OCI-LY7 (cell line): ENCODE measurements at regions of chr7 and their contacts with region 1.

Region 1: GRCh38 chr7:3154912-3155494 is 111.3 kb upstream of the CARD11 start:
- DNase-seq: peak; percentile 76
- H3K4me3 ChIP-seq: no peak overlapping the region
- H3K27ac ChIP-seq: no peak overlapping the region
- H3K4me1 ChIP-seq: peaks cover 40% of the 10 kb centered on the region
- CTCF ChIP-seq: peak; percentile 94

Region 2: GRCh38 chr7:2863461-2864066 is 291.4 kb before region 1 on chr7:
- CTCF ChIA-PET with region 1: interaction called, 3 read pairs
- POLR2A ChIA-PET with region 1: interaction called, 3 read pairs
- intact Hi-C with region 1: loop called (anchors 1 kb)
- DNase-seq: peak; percentile 40
- H3K4me3 ChIP-seq: no peak overlapping the region
- H3K27ac ChIP-seq: no peak overlapping the region
- H3K4me1 ChIP-seq: peaks cover 9% of the 10 kb centered on the region
- CTCF ChIP-seq: no peak

Region 3: DNA sequence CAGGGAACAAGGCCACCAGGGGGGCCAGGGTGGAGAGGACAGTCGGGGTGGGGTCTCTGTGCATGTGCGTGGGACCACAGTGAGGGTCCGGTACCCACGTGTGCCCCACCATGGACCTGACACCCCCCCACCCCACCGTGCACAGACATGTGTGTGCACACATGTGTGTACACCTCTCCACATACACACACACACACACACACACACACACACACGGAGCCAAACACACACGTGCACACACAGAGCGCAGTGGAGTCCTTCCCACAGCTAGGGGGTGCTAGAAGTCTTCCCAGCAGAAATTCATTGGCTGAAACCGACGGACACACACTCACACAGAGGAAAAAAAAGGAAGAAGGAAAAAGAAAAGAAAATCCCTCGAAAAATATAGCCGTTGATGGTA is 268.1 kb before region 1 on chr7:
- CTCF ChIA-PET with region 1: no interaction called
- POLR2A ChIA-PET with region 1: interaction called, 5 read pairs
- intact Hi-C with region 1: loop called (anchors 1 kb)
- DNase-seq: peak; percentile 84
- H3K4me3 ChIP-seq: no peak overlapping the region
- H3K27ac ChIP-seq: no peak overlapping the region
- H3K4me1 ChIP-seq: peaks cover 27% of the 10 kb centered on the region
- CTCF ChIP-seq: peak; percentile 95

Region 4: DNA sequence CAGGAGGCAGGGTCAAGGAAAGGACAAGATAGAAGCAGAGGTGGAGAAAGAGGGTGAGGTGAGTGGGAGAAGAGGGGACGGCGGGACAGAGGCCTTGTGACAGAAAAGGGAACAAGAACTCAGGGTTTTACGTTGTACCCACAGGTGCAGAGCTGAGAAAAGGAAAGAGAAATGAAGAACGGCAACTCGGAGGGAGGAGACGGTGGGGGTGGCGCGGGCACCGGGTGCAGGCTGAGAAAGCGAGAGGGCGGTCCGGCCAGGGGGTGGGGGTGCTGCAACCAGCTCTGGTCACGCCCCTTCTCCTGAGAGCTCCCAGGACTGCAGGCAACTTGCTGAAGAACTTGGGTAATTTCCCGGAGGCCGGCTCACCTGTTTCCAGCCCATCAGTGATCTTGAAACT is 176.6 kb before region 1 on chr7:
- CTCF ChIA-PET with region 1: no interaction called
- POLR2A ChIA-PET with region 1: interaction called, 3 read pairs
- intact Hi-C with region 1: loop called (anchors 2 kb)
- DNase-seq: peak; percentile 94
- H3K4me3 ChIP-seq: peak overlapping the region; percentile 73
- H3K27ac ChIP-seq: peak overlapping the region; percentile 90
- H3K4me1 ChIP-seq: peaks cover 66% of the 10 kb centered on the region
- CTCF ChIP-seq: no peak

Region 5: DNA sequence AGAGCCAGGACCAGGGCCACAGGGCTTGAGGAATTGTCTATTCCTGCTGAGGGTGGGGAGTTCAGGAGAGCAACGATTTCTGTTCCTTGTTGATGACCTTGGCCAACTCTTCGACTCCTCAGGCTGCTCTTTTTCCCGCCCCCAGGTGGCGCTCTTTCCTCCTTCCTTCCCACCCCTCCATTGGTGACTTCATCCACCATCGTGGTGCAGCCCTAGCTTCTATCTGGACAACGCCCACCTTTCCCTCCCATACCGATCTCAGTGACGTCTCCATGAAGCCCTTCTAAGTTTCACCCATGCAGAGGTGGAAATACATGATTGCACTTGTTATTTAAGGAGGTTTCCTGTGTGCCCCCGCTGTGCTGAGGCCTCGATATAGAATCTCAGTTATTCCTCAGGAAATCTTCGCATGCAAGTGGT is 89.3 kb before region 1 on chr7:
- CTCF ChIA-PET with region 1: no interaction called
- POLR2A ChIA-PET with region 1: no interaction called
- intact Hi-C with region 1: loop called (anchors 1 kb)
- DNase-seq: peak; percentile 60
- H3K4me3 ChIP-seq: no peak overlapping the region
- H3K27ac ChIP-seq: no peak overlapping the region
- H3K4me1 ChIP-seq: no peaks in the 10 kb centered on the region
- CTCF ChIP-seq: peak; percentile 90

Region 6: GRCh38 chr7:3089493-3089892 is 65.5 kb before region 1 on chr7:
- CTCF ChIA-PET with region 1: no interaction called
- POLR2A ChIA-PET with region 1: interaction called, 7 read pairs
- intact Hi-C with region 1: loop called (anchors 5 kb)
- DNase-seq: peak; percentile 40
- H3K4me3 ChIP-seq: no peak overlapping the region
- H3K27ac ChIP-seq: no peak overlapping the region
- H3K4me1 ChIP-seq: peaks cover 20% of the 10 kb centered on the region
- CTCF ChIP-seq: peak; percentile 74

Region 7: GRCh38 chr7:3232228-3232627 is 77.2 kb after region 1 on chr7:
- CTCF ChIA-PET with region 1: no interaction called
- POLR2A ChIA-PET with region 1: no interaction called
- intact Hi-C with region 1: no loop called
- DNase-seq: no peak
- H3K4me3 ChIP-seq: no peak overlapping the region
- H3K27ac ChIP-seq: no peak overlapping the region
- H3K4me1 ChIP-seq: no peaks in the 10 kb centered on the region
- CTCF ChIP-seq: no peak

Region 8: GRCh38 chr7:3267966-3268690 is 113.1 kb after region 1 on chr7:
- CTCF ChIA-PET with region 1: no interaction called
- POLR2A ChIA-PET with region 1: no interaction called
- intact Hi-C with region 1: no loop called
- DNase-seq: no peak
- H3K4me3 ChIP-seq: no peak overlapping the region
- H3K27ac ChIP-seq: no peak overlapping the region
- H3K4me1 ChIP-seq: no peaks in the 10 kb centered on the region
- CTCF ChIP-seq: no peak